Right ventricle myocardium inferior (tissue), 1 donor: ENCODE measurements at regions of chrX and their contacts with region 1.

Region 1: DNA sequence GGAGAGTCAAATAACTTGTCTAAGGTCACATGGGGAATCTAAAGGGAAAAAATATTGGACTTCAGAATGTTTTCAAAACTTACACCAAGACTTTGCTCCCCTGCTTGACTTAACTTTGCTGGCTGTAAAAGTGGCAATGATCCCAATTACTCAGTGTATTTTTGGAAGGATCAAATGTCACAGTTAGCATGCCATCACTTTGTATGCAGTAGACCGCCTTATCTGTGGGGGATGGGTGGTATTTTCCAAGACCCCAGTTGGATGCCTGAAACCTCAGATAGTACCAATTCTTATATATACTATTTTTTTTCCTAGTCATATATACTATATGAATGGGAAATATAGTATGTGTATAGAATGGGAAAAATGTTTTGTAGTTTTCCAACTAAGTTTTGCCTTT is 53.4 kb downstream of the COL4A6 start:
- DNase-seq: no peak
- ATAC-seq: no peak

Region 2: GRCh38 chrX:108304210-108304609 is 80.6 kb before region 1 on chrX:
- intact Hi-C with region 1: loop called (anchors 10 kb)
- DNase-seq: no peak
- ATAC-seq: no peak